A673 (cell line): ENCODE measurements at regions of chr3 and their contacts with region 1.

Region 1: DNA sequence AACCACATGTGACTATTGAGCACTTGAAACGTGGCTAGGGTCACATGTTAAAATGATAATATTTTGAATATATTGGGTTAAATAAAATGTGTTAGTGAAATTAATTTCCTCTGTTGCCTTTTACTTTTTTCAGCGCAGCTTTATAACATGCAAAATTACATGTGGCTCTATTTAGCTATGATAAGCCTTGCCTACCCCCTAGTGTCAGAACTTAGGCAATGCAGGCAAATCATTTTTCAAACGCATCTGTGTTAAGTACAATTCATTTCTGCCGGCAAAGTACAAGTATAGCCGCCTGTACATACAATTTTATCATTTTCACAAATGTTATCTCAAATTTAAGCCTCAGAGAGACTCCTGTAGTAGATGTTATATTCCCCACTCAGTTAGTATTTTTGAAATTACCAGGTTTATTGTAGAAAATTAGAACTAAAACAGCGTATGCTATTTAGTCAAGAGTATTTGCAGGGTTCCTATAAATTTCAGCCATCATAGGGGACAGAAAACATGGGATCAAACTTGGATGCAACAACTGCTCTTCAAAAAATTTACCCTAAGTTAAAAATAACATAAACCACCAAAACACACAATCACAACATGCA is 56.1 kb downstream of the TAFA4 start:
- DNase-seq: peak; percentile 51
- H3K4me3 ChIP-seq: no peak overlapping the region
- H3K27ac ChIP-seq: no peak overlapping the region
- H3K4me1 ChIP-seq: no peaks in the 10 kb centered on the region
- H3K27me3 ChIP-seq: no peaks in the 10 kb centered on the region
- CTCF ChIP-seq: peak; percentile 70

Region 2: GRCh38 chr3:67113802-67114407 is 1762.3 kb before region 1 on chr3:
- CTCF ChIA-PET with region 1: no interaction called
- POLR2A ChIA-PET with region 1: no interaction called
- intact Hi-C with region 1: loop called (anchors 5 kb)
- DNase-seq: peak; percentile 68
- H3K4me3 ChIP-seq: no peak overlapping the region
- H3K27ac ChIP-seq: no peak overlapping the region
- H3K4me1 ChIP-seq: no peaks in the 10 kb centered on the region
- H3K27me3 ChIP-seq: no peaks in the 10 kb centered on the region
- CTCF ChIP-seq: peak; percentile 70

Region 3: DNA sequence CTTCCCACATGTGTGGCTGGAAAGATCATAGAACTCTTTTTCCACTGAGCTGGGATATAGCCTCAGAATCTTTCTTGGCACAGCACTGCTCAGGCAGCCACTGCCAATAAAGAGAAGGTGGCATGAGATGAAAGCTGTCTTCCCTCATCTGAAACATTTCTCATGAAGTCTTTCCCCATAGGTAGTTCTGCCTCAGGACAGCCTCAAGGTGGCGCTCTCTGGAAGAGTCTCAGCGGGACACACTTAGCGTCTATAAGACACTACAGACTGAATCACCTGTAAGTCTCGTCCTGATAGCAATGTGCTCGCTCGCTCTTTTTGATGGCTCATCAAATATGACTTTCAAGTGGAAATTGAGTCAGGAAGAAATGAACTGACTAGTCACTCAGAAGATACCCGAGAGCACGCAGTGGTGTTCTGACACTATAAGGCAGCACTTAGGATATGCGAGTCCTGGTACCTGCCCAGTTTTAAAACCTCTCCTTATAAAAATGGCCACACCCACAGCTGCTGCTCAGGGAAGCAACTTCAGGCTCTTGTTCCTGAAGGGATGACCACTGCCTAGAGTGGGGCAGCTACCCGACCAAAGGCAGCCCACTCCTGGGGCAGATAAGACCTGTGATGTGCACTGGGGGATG is 1491.3 kb before region 1 on chr3:
- CTCF ChIA-PET with region 1: no interaction called
- POLR2A ChIA-PET with region 1: no interaction called
- intact Hi-C with region 1: loop called (anchors 5 kb)
- DNase-seq: peak; percentile 39
- H3K4me3 ChIP-seq: no peak overlapping the region
- H3K27ac ChIP-seq: no peak overlapping the region
- H3K4me1 ChIP-seq: no peaks in the 10 kb centered on the region
- H3K27me3 ChIP-seq: no peaks in the 10 kb centered on the region
- CTCF ChIP-seq: peak; percentile 65

Region 4: DNA sequence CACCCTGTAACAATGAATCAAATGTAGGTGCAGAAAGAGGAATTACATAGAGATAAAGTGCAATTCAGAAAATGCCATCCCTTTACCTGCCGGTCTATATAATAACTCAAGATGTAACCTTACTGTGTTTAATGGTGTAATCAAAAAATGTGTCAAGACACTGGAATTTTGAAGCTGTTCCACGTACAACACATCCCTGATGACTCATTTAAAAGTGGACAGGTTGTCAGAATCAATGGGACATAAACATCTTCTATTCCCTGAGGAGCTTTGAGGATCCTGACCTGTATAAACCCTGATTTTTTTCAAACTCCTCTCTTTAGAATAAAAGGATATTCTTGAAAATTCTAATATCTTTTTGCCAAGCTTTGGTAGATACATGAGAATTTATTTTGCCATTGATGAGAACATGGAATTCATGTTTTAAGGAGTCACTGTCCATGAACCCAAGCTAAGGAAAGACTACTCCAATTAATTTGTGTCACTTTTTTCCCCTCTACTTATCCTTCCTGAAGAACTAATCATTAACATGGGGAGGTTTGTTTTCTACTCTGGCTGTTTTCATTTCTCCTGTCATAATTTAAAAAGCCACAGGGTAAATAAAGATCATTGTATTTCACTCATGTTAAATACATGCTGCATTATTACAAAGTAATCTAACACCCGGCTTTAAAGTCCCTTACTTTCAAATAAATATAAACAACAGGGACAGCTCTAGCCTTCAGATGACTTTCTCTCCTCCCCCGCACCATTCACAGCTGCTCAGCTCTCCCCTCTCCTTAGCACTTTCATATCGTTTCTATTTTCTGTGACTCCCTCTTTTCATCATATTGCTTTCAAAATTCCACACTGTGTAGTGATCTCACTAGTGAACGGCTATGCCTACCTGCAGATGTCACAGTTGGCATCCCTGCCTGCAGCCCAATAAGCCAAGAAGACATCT is 82.2 kb before region 1 on chr3:
- CTCF ChIA-PET with region 1: no interaction called
- POLR2A ChIA-PET with region 1: no interaction called
- intact Hi-C with region 1: no loop called
- DNase-seq: no peak
- H3K4me3 ChIP-seq: no peak overlapping the region
- H3K27ac ChIP-seq: no peak overlapping the region
- H3K4me1 ChIP-seq: no peaks in the 10 kb centered on the region
- H3K27me3 ChIP-seq: no peaks in the 10 kb centered on the region
- CTCF ChIP-seq: no peak

Region 5: GRCh38 chr3:68972358-68972979 is 96.3 kb after region 1 on chr3:
- CTCF ChIA-PET with region 1: no interaction called
- POLR2A ChIA-PET with region 1: no interaction called
- intact Hi-C with region 1: loop called (anchors 5 kb)
- DNase-seq: peak; percentile 67
- H3K4me3 ChIP-seq: no peak overlapping the region
- H3K27ac ChIP-seq: no peak overlapping the region
- H3K4me1 ChIP-seq: no peaks in the 10 kb centered on the region
- H3K27me3 ChIP-seq: no peaks in the 10 kb centered on the region
- CTCF ChIP-seq: peak; percentile 68